Body of pancreas (tissue), 4 donors: ENCODE measurements at regions of chr2 and their contacts with region 1.

Region 1: GRCh38 chr2:65377556-65378192 is 54.7 kb downstream of the SPRED2 start:
- DNase-seq: peak in 1 of 4 donors; percentile 46
- ATAC-seq: peak; percentile 49
- H3K4me3 ChIP-seq: no peak overlapping the region
- H3K27ac ChIP-seq: no peak overlapping the region
- H3K4me1 ChIP-seq: peaks cover 47% of the 10 kb centered on the region
- H3K27me3 ChIP-seq: no peaks in the 10 kb centered on the region
- CTCF ChIP-seq: no peak
- POLR2A ChIP-seq: no peak

Region 2: GRCh38 chr2:65420712-65421431 is 43.2 kb after region 1 on chr2:
- intact Hi-C with region 1: loop called (anchors 10 kb)
- DNase-seq: no peak
- ATAC-seq: no peak
- H3K4me3 ChIP-seq: no peak overlapping the region
- H3K27ac ChIP-seq: peak overlapping the region in 3 of 4 donors; percentile 14 to 32 (median 27)
- H3K4me1 ChIP-seq: peaks cover 41% of the 10 kb centered on the region
- H3K27me3 ChIP-seq: no peaks in the 10 kb centered on the region
- CTCF ChIP-seq: no peak
- POLR2A ChIP-seq: no peak

Region 3: GRCh38 chr2:65436169-65436823 is 58.6 kb after region 1 on chr2:
- intact Hi-C with region 1: no loop called
- DNase-seq: peak; percentile 90 to 93 (median 92)
- ATAC-seq: peak; percentile 68
- H3K4me3 ChIP-seq: peak overlapping the region; percentile 23 to 51
- H3K27ac ChIP-seq: peak overlapping the region; percentile 95 to 100 (median 96)
- H3K4me1 ChIP-seq: peaks cover 17% of the 10 kb centered on the region
- H3K27me3 ChIP-seq: no peaks in the 10 kb centered on the region
- CTCF ChIP-seq: no peak
- POLR2A ChIP-seq: peak; percentile 83 to 94 (median 90)